Mammary epithelial cell (primary cell): ENCODE measurements at regions of chr5 and their contacts with region 1.

Region 1: GRCh38 chr5:66828548-66829357 is 232.6 kb downstream of the MAST4 start:
- DNase-seq: peak; percentile 89
- H3K4me3 ChIP-seq: peak overlapping the region; percentile 55 to 73 (median 61)
- H3K27ac ChIP-seq: peak overlapping the region; percentile 90
- H3K4me1 ChIP-seq: peaks cover 12% of the 10 kb centered on the region
- H3K27me3 ChIP-seq: no peaks in the 10 kb centered on the region
- CTCF ChIP-seq: no peak

Region 2: DNA sequence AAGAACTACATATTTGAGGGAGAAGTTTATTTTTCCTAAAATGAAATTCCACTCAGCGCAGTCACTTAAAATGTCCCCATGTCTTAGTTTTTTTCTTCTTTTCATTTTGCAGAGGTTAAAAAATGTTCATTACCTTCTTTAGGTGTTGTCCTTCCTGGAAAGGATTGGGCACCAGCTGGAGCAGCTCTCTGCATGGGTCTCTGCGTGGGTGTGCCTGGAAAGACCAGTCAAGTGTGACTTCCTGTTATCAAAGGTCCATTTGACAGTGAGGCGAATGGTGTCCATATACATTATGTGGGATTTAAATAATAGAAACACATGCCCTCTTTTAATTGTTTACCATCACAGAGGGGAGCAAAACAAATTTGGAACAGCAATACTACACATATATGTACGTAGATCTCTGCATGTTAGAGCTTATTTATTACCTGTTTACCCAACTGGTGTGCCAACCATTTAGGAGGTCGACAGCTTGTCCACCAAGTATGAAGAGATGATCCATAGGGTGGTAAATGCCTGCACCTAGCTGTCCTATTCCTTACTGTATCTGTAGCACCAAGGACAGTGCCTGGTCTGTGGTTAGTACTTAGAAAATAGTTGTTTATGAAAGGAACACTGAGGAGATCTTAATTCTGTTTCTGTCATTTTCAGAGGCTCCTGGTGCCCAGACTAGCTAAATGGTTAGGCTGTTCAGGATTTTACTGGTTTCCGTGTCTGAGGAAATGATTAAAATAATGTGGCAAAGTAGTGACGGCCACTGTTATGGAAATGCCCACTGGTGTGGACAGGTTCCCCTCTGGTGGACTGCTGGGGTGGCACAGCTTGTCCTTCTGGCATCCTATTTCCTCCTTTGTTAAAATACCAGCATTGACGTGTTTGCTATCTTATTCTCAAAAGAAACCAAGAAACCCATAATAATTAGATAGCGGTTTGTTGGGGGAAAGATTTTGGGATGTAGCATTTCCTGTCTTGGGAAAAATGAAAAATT is 32.2 kb before region 1 on chr5:
- CTCF ChIA-PET with region 1: no interaction called
- dilution Hi-C with region 1: no loop called
- in situ Hi-C with region 1: no loop called
- intact Hi-C with region 1: no loop called
- DNase-seq: no peak
- H3K4me3 ChIP-seq: no peak overlapping the region
- H3K27ac ChIP-seq: no peak overlapping the region
- H3K4me1 ChIP-seq: no peaks in the 10 kb centered on the region
- H3K27me3 ChIP-seq: no peaks in the 10 kb centered on the region
- CTCF ChIP-seq: peak in 1 of 2 donors; percentile 21

Region 3: GRCh38 chr5:66849803-66850202 is 21.1 kb after region 1 on chr5:
- CTCF ChIA-PET with region 1: interaction called, 6 read pairs
- dilution Hi-C with region 1: no loop called
- in situ Hi-C with region 1: no loop called
- intact Hi-C with region 1: loop called (anchors 1 kb)
- DNase-seq: peak; percentile 84
- H3K4me3 ChIP-seq: peak overlapping the region; percentile 3 to 40 (median 29)
- H3K27ac ChIP-seq: peak overlapping the region; percentile 100
- H3K4me1 ChIP-seq: peaks cover 33% of the 10 kb centered on the region
- H3K27me3 ChIP-seq: no peaks in the 10 kb centered on the region
- CTCF ChIP-seq: no peak

Region 4: DNA sequence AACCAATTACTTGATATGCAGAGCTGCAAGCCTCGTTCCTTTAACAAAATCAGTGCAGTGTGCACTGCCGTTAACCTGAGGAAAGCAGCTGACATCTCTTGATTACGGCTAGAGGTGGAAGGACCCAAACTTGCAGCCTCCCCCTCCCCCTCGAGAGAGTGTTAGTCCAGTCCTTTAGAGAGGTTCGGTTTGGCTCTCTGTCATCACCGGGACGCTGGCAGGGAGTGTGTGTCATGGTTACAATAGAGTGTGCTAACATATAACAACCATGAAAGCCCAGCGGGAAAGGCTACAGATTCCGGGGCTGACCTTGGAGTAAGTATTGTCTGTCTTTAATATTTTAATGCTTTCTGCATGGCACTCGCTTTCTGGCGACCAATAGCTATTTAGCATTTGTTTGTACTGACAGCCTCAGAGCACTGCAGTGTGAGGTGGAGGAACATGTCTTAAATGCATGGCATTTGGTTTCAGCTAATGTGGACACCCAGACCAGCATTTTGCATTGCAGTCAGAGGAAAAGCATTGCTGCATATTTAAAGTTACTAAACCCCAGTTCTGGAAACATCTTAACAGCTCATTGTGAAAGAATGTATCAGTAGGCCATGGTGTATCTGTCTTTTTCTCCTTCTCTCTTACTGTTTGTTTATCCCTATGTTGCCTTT is 130.4 kb after region 1 on chr5:
- CTCF ChIA-PET with region 1: no interaction called
- dilution Hi-C with region 1: no loop called
- in situ Hi-C with region 1: no loop called
- intact Hi-C with region 1: loop called (anchors 5 kb)
- DNase-seq: peak; percentile 45
- H3K4me3 ChIP-seq: peak overlapping the region; percentile 45 to 50 (median 49)
- H3K27ac ChIP-seq: peak overlapping the region; percentile 92
- H3K4me1 ChIP-seq: peaks cover 31% of the 10 kb centered on the region
- H3K27me3 ChIP-seq: no peaks in the 10 kb centered on the region
- CTCF ChIP-seq: no peak

Region 5: DNA sequence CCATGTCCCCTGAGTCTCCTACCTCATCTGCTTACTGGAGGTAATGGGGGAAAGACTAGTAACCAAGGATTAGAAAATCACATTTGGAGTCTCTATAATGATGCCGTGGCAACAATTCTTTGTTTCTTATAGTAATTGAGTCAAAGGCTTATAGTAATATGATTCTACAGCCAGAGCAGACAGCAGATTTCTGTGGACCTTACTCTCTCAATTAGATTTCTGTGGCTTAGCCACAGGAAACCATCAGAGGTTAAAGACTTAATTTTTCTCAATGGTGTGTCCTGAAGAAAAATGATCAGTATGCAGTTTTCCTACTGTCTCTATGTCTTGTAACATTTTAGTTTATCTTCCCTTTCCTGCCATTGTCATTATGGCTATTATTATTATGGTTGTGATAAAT is 427.1 kb after region 1 on chr5:
- CTCF ChIA-PET with region 1: no interaction called
- dilution Hi-C with region 1: no loop called
- in situ Hi-C with region 1: no loop called
- intact Hi-C with region 1: no loop called
- DNase-seq: no peak
- H3K4me3 ChIP-seq: no peak overlapping the region
- H3K27ac ChIP-seq: peak overlapping the region; percentile 69
- H3K4me1 ChIP-seq: peaks cover 34% of the 10 kb centered on the region
- H3K27me3 ChIP-seq: no peaks in the 10 kb centered on the region
- CTCF ChIP-seq: no peak